MCF 10A (cell line): ENCODE measurements at regions of chr12 and their contacts with region 1.

Region 1: GRCh38 chr12:117874842-117875434 is 93.9 kb downstream of the KSR2 start:
- DNase-seq: peak; percentile 66
- H3K4me3 Mint-ChIP-seq: no peak overlapping the region
- H3K27ac Mint-ChIP-seq: no peak overlapping the region
- H3K4me1 Mint-ChIP-seq: no peaks in the 10 kb centered on the region
- H3K27me3 Mint-ChIP-seq: peaks cover 7% of the 10 kb centered on the region
- CTCF ChIP-seq: peak; percentile 88

Region 2: DNA sequence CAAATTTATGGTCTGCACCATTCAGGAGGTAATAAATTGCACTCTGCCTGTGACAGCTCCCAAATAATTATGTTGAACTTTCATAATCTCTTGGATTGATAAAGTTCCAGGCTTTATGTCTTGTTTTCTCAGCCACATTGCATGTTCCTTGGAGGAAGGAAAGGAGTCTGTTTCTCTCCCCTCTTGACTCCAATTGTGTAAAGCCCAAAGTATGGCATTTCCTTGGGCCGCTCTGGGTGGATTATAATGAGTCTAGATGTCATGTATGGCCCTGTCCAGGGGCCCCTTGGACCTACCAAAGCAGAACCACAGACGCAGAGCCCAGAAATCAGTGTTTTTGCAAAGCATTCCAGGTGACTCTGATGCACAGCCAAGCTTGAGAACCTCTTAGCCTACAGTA is 67.0 kb before region 1 on chr12:
- CTCF ChIA-PET with region 1: no interaction called
- POLR2A ChIA-PET with region 1: no interaction called
- intact Hi-C with region 1: no loop called
- DNase-seq: no peak
- H3K4me3 Mint-ChIP-seq: no peak overlapping the region
- H3K27ac Mint-ChIP-seq: no peak overlapping the region
- H3K4me1 Mint-ChIP-seq: peaks cover 11% of the 10 kb centered on the region
- H3K27me3 Mint-ChIP-seq: no peaks in the 10 kb centered on the region
- CTCF ChIP-seq: no peak

Region 3: DNA sequence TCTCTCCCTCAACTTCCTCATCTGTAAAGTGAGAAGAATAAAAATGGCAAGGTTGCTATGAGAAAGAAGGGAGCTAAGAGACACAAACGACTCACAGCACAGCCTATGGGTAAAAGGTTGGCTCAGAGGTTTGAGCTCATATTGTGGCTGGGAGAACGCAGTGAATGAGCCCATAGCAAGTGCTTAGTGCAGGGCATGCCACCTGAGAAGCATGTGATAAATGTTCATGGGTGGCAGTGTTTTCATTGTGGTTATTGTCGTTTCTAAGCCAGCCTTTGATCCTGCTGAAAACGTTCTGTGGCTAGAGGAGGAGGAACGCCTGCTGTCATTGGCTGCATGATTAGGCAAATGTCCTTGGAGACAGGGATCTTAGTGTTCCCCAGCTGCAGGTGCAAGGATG is 56.5 kb before region 1 on chr12:
- CTCF ChIA-PET with region 1: no interaction called
- POLR2A ChIA-PET with region 1: no interaction called
- intact Hi-C with region 1: no loop called
- DNase-seq: no peak
- H3K4me3 Mint-ChIP-seq: no peak overlapping the region
- H3K27ac Mint-ChIP-seq: peak overlapping the region; percentile 37
- H3K4me1 Mint-ChIP-seq: peaks cover 18% of the 10 kb centered on the region
- H3K27me3 Mint-ChIP-seq: no peaks in the 10 kb centered on the region
- CTCF ChIP-seq: no peak

Region 4: GRCh38 chr12:117857632-117858612 is 17.0 kb before region 1 on chr12:
- CTCF ChIA-PET with region 1: interaction called, 20 read pairs
- POLR2A ChIA-PET with region 1: no interaction called
- intact Hi-C with region 1: no loop called
- DNase-seq: peak; percentile 65
- H3K4me3 Mint-ChIP-seq: no peak overlapping the region
- H3K27ac Mint-ChIP-seq: no peak overlapping the region
- H3K4me1 Mint-ChIP-seq: no peaks in the 10 kb centered on the region
- H3K27me3 Mint-ChIP-seq: no peaks in the 10 kb centered on the region
- CTCF ChIP-seq: peak; percentile 38

Region 5: GRCh38 chr12:118016424-118017264 is 141.7 kb after region 1 on chr12 and contains the start of gene RFC5:
- CTCF ChIA-PET with region 1: interaction called, 12 read pairs
- POLR2A ChIA-PET with region 1: no interaction called
- intact Hi-C with region 1: loop called (anchors 1 kb)
- DNase-seq: peak; percentile 97
- H3K4me3 Mint-ChIP-seq: peak within 1 kb of the TSS; percentile 87
- H3K27ac Mint-ChIP-seq: peak within 1 kb of the TSS; percentile 77
- H3K4me1 Mint-ChIP-seq: peaks cover 6% of the 10 kb centered on the region
- H3K27me3 Mint-ChIP-seq: no peaks in the 10 kb centered on the region
- CTCF ChIP-seq: no peak
- total RNA-seq, gene RFC5: 10.1 and 13.9 TPM in 2 replicates

Region 6: DNA sequence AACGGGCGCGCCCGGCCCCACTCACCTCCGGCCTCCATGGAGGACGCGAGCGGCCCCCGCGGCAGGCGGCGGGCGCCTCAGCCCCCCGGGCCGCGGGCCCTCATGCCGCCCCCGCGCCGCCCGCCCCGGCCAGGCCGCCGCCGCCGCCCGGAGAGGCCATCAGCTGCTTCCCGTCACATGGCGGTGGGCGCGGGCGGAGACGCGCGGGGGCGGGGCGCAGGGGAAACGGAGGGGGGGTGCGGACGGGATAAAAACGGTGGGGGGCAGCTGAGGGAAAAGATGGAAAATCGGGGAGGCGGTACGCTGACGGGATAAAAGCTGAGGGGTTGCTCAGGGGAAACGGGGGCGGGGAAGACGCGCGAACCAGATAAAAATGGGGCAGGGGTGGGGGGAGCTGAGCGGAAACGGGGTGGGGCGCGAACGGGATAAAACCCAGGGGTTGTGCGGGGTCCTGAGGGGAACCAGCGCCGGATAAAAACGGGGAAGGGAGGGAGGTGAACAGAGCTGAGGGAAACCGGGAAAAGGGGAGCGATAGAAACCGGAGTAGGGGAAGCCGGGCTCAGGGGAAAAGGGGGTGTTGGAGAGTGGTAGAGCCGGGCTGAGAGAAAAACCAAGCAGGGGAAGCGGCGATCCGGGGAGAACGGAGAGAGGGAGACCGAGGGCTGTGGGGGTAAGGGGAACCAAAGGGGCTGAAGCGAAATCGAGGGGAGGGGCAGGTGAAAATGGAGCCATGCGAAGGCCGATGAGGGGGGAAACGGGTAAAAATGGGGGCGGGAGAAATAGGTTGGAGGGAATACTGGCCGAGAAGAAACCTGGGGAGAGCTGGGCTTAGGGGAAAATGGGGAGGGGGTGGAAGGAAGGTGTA is 186.3 kb after region 1 on chr12 and contains the start of gene WSB2:
- CTCF ChIA-PET with region 1: interaction called, 11 read pairs
- POLR2A ChIA-PET with region 1: no interaction called
- intact Hi-C with region 1: no loop called
- DNase-seq: no peak
- H3K4me3 Mint-ChIP-seq: peak within 1 kb of the TSS; percentile 89
- H3K27ac Mint-ChIP-seq: peak within 1 kb of the TSS; percentile 93
- H3K4me1 Mint-ChIP-seq: peaks cover 21% of the 10 kb centered on the region
- H3K27me3 Mint-ChIP-seq: no peaks in the 10 kb centered on the region
- CTCF ChIP-seq: no peak
- total RNA-seq, gene WSB2: 55.9 and 99.8 TPM in 2 replicates

Region 7: GRCh38 chr12:118135788-118136558 is 261.0 kb after region 1 on chr12 and contains the start of gene PEBP1:
- CTCF ChIA-PET with region 1: interaction called, 21 read pairs
- POLR2A ChIA-PET with region 1: no interaction called
- intact Hi-C with region 1: no loop called
- DNase-seq: peak; percentile 94
- H3K4me3 Mint-ChIP-seq: peak within 1 kb of the TSS; percentile 84
- H3K27ac Mint-ChIP-seq: peak within 1 kb of the TSS; percentile 47
- H3K4me1 Mint-ChIP-seq: peaks cover 10% of the 10 kb centered on the region
- H3K27me3 Mint-ChIP-seq: no peaks in the 10 kb centered on the region
- CTCF ChIP-seq: no peak
- total RNA-seq, gene PEBP1: 91.4 and 117 TPM in 2 replicates